ENCODE measurements at regions of chr10 and their contacts with region 1.

Region 1: GRCh38 chr10:92290837-92291615 is at the starts of genes CPEB3 and MARCHF5:
- DNase-seq: peak; percentile 98
- H3K4me3 ChIP-seq: peak within 1 kb of the TSS; percentile 71 to 99 (median 93)
- H3K27ac ChIP-seq: peak within 1 kb of the TSS; percentile 93 to 98 (median 97)
- H3K4me1 ChIP-seq: no peaks in the 10 kb centered on the region
- H3K27me3 ChIP-seq: no peaks in the 10 kb centered on the region
- CTCF ChIP-seq: peak; percentile 38 to 88 (median 77)
- POLR2A ChIP-seq: peak in 1 of 2 donors; percentile 92
- total RNA-seq, gene CPEB3: 12.3 to 18.4 (median 12.7) TPM
- total RNA-seq, gene MARCHF5: 24.2 to 29.8 (median 27.7) TPM

Region 2: GRCh38 chr10:92068900-92069299 is 222.1 kb before region 1 on chr10:
- intact Hi-C with region 1: no loop called
- DNase-seq: no peak
- H3K4me3 ChIP-seq: no peak overlapping the region
- H3K27ac ChIP-seq: no peak overlapping the region
- H3K4me1 ChIP-seq: no peaks in the 10 kb centered on the region
- H3K27me3 ChIP-seq: no peaks in the 10 kb centered on the region
- CTCF ChIP-seq: no peak
- POLR2A ChIP-seq: no peak

Region 3: DNA sequence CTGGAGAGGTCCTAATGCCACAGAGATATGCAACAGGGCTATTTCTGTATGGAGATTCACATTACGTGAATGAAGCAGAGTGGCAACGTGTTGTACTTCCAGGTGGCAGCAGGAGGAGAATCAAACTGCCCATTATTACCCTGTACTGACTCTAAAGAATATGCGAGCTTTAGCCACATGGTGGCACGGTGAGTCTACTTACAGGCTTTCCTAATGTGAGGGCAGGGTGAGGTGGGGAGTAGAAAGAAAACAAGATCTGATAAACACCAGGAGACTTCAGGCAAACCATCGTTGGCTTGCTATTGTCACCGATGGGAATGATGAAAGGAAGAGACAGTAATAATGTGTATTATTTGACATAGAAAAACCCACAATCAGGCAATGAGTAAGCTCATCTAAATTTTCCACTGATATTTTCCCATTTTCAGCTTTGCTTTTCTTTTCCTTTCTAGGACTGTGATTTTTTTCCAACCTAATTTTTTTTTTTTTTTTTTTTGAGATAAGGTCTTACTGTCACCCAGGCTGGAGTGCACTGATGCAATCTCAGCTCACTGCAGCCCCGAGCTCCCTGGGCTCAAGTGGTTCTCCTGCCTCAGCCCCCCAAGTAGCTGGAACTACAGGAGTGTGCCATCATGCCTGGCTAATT is 203.2 kb before region 1 on chr10:
- intact Hi-C with region 1: loop called (anchors 5 kb)
- DNase-seq: peak; percentile 86 to 90
- H3K4me3 ChIP-seq: no peak overlapping the region
- H3K27ac ChIP-seq: peak overlapping the region; percentile 71 to 84 (median 76)
- H3K4me1 ChIP-seq: peaks cover 11 to 25% of the 10 kb centered on the region in 2 donors
- H3K27me3 ChIP-seq: no peaks in the 10 kb centered on the region
- CTCF ChIP-seq: peak; percentile 53 to 99 (median 86)
- POLR2A ChIP-seq: no peak

Region 4: DNA sequence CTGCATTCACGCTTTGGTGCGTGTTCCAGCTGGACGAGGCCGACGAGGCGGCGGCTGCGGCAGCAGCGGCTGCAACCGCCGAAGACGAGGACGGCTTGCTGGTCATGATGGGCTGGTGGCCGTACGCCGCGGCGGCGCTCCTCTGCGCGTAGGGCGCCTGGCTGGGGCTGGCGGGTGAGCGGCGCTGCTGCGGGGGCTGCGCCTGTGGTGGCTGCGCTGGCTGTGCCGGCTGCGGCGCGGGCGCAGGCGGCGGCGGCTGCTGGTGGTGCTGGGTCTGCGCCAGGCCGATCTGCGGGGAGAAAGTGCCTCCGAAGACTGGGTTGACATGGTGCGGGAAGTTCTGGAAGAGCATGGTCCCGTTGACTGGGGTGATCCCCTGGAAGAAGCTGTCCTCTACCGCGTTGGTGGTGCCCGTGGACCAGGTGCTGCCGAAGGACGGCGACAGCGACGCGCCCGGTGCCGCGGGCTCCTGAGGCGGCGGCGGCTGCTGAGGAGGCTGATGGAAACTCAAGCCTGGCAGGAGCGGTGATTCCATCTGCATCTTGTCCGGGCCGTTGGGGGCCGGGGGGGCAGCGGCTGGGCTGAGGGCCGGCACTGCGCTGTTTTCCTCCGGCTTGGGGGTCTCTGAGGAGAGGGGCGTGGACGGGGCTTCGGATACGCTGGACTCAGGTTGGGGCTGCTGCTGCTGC is 51.3 kb before region 1 on chr10:
- intact Hi-C with region 1: loop called (anchors 5 kb)
- DNase-seq: peak in 1 of 2 donors; percentile 51
- H3K4me3 ChIP-seq: peak overlapping the region; percentile 31 to 68 (median 48)
- H3K27ac ChIP-seq: peak overlapping the region; percentile 81 to 95 (median 90)
- H3K4me1 ChIP-seq: peaks cover 12 to 23% of the 10 kb centered on the region in 2 donors
- H3K27me3 ChIP-seq: no peaks in the 10 kb centered on the region
- CTCF ChIP-seq: no peak
- POLR2A ChIP-seq: no peak

Region 5: GRCh38 chr10:92381543-92381954 is 90.5 kb after region 1 on chr10:
- intact Hi-C with region 1: no loop called
- DNase-seq: no peak
- H3K4me3 ChIP-seq: no peak overlapping the region
- H3K27ac ChIP-seq: no peak overlapping the region
- H3K4me1 ChIP-seq: no peaks in the 10 kb centered on the region
- H3K27me3 ChIP-seq: no peaks in the 10 kb centered on the region
- CTCF ChIP-seq: no peak
- POLR2A ChIP-seq: no peak

Measured in thyroid gland (tissue), 4 donors.